ENCODE measurements at regions of chr4 and their contacts with region 1.

Region 1: GRCh38 chr4:153594210-153594609 is 89.9 kb upstream of the TLR2 start:
- DNase-seq: no peak
- ATAC-seq: no peak
- H3K4me3 ChIP-seq: no peak overlapping the region
- H3K4me3 Mint-ChIP-seq: no peak overlapping the region
- H3K27ac ChIP-seq: no peak overlapping the region
- H3K27ac Mint-ChIP-seq: peak overlapping the region in 1 of 9 donors; percentile 56
- H3K4me1 ChIP-seq: no peaks in the 10 kb centered on the region
- H3K4me1 Mint-ChIP-seq: peaks cover 1 to 16% (median 12%) of the 10 kb centered on the region in 7 donors
- H3K27me3 ChIP-seq: no peaks in the 10 kb centered on the region
- H3K27me3 Mint-ChIP-seq: no peaks in the 10 kb centered on the region

Region 2: GRCh38 chr4:153579872-153580271 is 14.3 kb before region 1 on chr4:
- CTCF ChIA-PET with region 1: interaction called, 3 read pairs
- POLR2A ChIA-PET with region 1: interaction called, 4 read pairs
- intact Hi-C with region 1: loop called in 1 of 2 experiments (anchors 2 kb)
- DNase-seq: no peak
- ATAC-seq: no peak
- H3K4me3 ChIP-seq: no peak overlapping the region
- H3K4me3 Mint-ChIP-seq: no peak overlapping the region
- H3K27ac ChIP-seq: no peak overlapping the region
- H3K27ac Mint-ChIP-seq: peak overlapping the region in 6 of 9 donors; percentile 60 to 91 (median 82)
- H3K4me1 ChIP-seq: peaks cover 0 to 5% of the 10 kb centered on the region in 2 donors
- H3K4me1 Mint-ChIP-seq: peaks cover 23 to 73% (median 51%) of the 10 kb centered on the region in 7 donors
- H3K27me3 ChIP-seq: no peaks in the 10 kb centered on the region
- H3K27me3 Mint-ChIP-seq: no peaks in the 10 kb centered on the region

Region 3: GRCh38 chr4:153611679-153612078 is 17.5 kb after region 1 on chr4:
- CTCF ChIA-PET with region 1: interaction called, 3 read pairs
- POLR2A ChIA-PET with region 1: no interaction called
- intact Hi-C with region 1: loop called in 1 of 2 experiments (anchors 2 kb)
- DNase-seq: no peak
- ATAC-seq: no peak
- H3K4me3 ChIP-seq: no peak overlapping the region
- H3K4me3 Mint-ChIP-seq: no peak overlapping the region
- H3K27ac ChIP-seq: no peak overlapping the region
- H3K27ac Mint-ChIP-seq: peak overlapping the region in 8 of 9 donors; percentile 27 to 87 (median 58)
- H3K4me1 ChIP-seq: no peaks in the 10 kb centered on the region
- H3K4me1 Mint-ChIP-seq: peaks cover 23 to 69% (median 59%) of the 10 kb centered on the region in 7 donors
- H3K27me3 ChIP-seq: no peaks in the 10 kb centered on the region
- H3K27me3 Mint-ChIP-seq: no peaks in the 10 kb centered on the region

Region 4: DNA sequence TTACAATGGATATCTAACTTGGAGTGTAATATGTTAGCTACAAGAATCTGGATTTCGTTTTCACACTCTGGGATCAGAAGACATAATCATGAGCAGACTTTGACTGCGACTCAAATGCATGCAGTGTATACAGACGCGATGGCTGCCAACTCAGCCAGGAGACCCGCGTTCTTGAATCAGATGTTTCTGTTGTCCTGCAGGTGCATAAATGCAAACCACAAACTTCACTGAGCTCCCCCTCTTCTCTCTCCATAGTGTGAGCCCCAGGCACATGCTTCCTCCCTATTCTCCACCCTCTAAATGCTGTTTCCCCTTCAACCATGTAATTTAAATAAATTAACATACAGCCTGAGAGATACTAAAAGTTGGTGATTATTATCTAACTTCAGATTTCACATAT is 549.5 kb after region 1 on chr4:
- CTCF ChIA-PET with region 1: no interaction called
- POLR2A ChIA-PET with region 1: no interaction called
- intact Hi-C with region 1: no loop called
- DNase-seq: no peak
- ATAC-seq: no peak
- H3K4me3 ChIP-seq: no peak overlapping the region
- H3K4me3 Mint-ChIP-seq: no peak overlapping the region
- H3K27ac ChIP-seq: no peak overlapping the region
- H3K27ac Mint-ChIP-seq: no peak overlapping the region
- H3K4me1 ChIP-seq: no peaks in the 10 kb centered on the region
- H3K4me1 Mint-ChIP-seq: no peaks in the 10 kb centered on the region
- H3K27me3 ChIP-seq: no peaks in the 10 kb centered on the region
- H3K27me3 Mint-ChIP-seq: peaks cover 0 to 6% (median 0%) of the 10 kb centered on the region in 5 donors

Measured in naive thymus-derived CD4-positive, alpha-beta T cell (primary cell).